Heart right ventricle (tissue), 16 donors: ENCODE measurements at regions of chr11 and their contacts with region 1.

Region 1: DNA sequence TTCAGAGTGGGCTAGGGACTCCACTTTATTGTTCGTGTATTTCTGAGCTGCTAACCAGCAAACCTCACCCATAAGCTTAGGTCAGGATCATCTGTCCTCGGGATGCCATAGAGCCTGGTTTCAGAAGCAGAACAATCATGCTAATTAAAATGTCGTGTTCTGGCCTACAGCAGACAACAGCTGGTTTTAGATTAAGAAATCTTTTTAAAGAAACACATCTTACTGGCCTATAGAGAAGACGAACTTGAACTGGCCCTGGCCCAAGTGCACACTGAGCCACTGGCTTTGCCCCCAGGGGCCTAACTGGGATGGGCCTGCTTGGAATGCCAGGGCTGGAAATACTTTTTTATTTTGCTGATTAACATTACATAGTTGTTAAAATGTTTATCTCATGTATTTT is 63.2 kb downstream of the ALX4 start:
- DNase-seq: peak in 1 of 2 donors; percentile 57
- ATAC-seq: peak in 3 of 8 donors; percentile 14 to 58 (median 43)
- H3K4me3 ChIP-seq: no peak overlapping the region
- H3K27ac ChIP-seq: peak overlapping the region in 1 of 10 donors; percentile 34
- H3K4me1 ChIP-seq: peaks cover 16 to 67% (median 45%) of the 10 kb centered on the region in 9 donors
- H3K27me3 ChIP-seq: no peaks in the 10 kb centered on the region
- CTCF ChIP-seq: no peak

Region 2: DNA sequence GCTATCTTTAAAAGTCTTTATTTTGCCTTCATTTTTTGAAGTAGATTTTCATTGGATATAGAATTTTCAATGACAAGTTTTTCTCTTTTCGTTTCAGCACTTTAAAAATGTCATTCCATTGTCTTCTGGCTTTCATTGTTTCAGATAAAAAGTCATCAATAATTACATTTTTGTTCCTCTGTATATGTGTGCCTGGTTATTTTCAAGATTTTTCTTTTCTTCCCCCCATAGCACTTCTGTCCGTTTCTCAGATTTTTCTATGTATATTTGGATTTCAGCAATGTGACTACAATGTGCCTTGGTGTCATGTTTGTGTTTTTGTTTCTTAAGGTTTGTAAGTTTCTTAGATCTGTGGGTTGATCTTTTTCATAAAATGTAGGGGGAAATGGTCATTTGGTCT is 632.5 kb before region 1 on chr11:
- intact Hi-C with region 1: no loop called
- DNase-seq: no peak
- ATAC-seq: no peak
- H3K4me3 ChIP-seq: no peak overlapping the region
- H3K27ac ChIP-seq: no peak overlapping the region
- H3K4me1 ChIP-seq: no peaks in the 10 kb centered on the region
- H3K27me3 ChIP-seq: peaks cover 0 to 27% (median 6%) of the 10 kb centered on the region in 7 donors
- CTCF ChIP-seq: no peak

Region 3: GRCh38 chr11:44208976-44209603 is 37.6 kb before region 1 on chr11:
- intact Hi-C with region 1: no loop called
- DNase-seq: no peak
- ATAC-seq: no peak
- H3K4me3 ChIP-seq: no peak overlapping the region
- H3K27ac ChIP-seq: no peak overlapping the region
- H3K4me1 ChIP-seq: peaks cover 0 to 11% (median 3%) of the 10 kb centered on the region in 9 donors
- H3K27me3 ChIP-seq: no peaks in the 10 kb centered on the region
- CTCF ChIP-seq: no peak

Region 4: DNA sequence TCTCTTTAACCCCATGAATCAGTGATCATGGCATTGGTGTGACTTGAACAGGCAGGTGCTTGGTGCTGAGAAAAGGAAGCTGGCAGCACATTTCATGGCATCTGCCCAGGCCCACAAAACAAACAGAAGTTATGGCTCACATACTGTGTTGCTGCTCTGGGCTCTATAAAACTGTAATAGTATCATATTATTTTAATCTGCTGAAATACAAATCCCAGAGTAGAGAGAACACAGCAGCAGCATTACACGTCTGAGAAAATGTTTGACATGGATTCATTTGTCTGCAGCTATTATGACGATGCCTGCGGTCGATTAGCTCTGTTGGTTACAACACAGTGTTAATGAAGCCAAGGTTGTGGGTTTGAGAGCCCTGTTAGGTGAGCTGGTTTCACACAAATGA is 17.6 kb before region 1 on chr11:
- intact Hi-C with region 1: loop called in 1 of 10 experiments (anchors 1 kb)
- DNase-seq: no peak
- ATAC-seq: no peak
- H3K4me3 ChIP-seq: no peak overlapping the region
- H3K27ac ChIP-seq: no peak overlapping the region
- H3K4me1 ChIP-seq: peaks cover 0 to 27% (median 8%) of the 10 kb centered on the region in 9 donors
- H3K27me3 ChIP-seq: no peaks in the 10 kb centered on the region
- CTCF ChIP-seq: no peak

Region 5: GRCh38 chr11:44301856-44302231 is 55.1 kb after region 1 on chr11:
- intact Hi-C with region 1: loop called in 1 of 10 experiments (anchors 5 kb)
- DNase-seq: no peak
- ATAC-seq: peak in 2 of 8 donors; percentile 32 to 44
- H3K4me3 ChIP-seq: no peak overlapping the region
- H3K27ac ChIP-seq: no peak overlapping the region
- H3K4me1 ChIP-seq: peaks cover 9 to 28% (median 21%) of the 10 kb centered on the region in 9 donors
- H3K27me3 ChIP-seq: peaks cover 22 to 79% (median 65%) of the 10 kb centered on the region in 7 donors
- CTCF ChIP-seq: no peak